KBM-7 (cell line): ENCODE measurements at regions of chr4 and their contacts with region 1.

Region 1: DNA sequence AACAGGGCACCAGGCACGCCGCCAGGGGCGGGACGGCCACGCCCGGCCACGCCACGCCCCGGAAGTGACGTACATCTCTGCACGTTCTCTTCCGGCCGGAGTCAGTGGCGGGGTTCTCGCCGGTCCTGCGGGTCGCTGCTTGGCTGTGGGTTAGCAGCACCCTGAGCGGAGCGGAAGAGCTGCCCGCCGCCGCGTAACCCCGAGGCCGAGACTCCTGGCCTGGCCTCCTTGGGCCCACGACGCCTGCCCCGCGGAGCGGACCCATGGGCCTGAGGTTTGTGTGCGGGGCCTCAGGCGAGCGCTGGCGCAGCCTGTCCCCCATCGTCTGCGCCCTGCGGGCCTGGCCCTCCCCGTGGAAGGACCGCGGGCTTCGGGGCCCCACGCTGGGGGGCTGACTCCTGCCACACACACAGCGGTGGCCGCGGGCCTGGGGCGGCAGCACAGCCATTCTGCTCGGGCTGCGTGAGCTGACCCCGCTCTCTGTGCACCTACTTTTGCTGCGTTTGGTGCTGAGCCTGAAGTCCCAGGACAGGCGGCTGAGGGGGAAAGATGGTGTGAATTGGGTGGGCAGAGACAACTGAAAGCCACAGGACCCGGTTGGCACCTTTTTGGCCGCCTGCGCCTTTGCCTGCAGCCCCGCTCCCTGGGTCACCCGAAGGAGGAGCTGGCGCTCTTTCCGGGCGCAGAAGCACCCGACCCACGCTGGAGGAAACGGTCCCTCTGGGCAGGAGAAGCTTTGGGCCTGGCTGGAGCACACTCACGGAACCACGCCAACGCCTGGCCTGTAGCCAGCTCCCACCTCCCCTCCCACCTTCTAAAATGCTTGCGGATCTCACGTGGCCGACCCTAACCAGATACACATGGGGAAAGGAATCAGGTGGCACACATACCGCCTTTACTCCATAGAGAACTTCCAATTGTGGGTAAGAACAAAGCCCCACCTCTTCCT is 28.1 kb downstream of the NOP14 start:
- DNase-seq: peak; percentile 93

Region 2: GRCh38 chr4:2755837-2756694 is 179.0 kb before region 1 on chr4 and contains the start of gene TNIP2:
- in situ Hi-C with region 1: loop called (anchors 10 kb)
- DNase-seq: peak; percentile 64